H1 (cell line): ENCODE measurements at regions of chr12 and their contacts with region 1.

Region 1: GRCh38 chr12:90970473-90970872 is 15.5 kb upstream of the CCER1 start:
- DNase-seq: no peak
- H3K4me3 ChIP-seq: no peak overlapping the region
- H3K27ac ChIP-seq: no peak overlapping the region
- H3K4me1 ChIP-seq: no peaks in the 10 kb centered on the region
- H3K27me3 ChIP-seq: no peaks in the 10 kb centered on the region
- CTCF ChIP-seq: no peak
- EP300 ChIP-seq: no peak
- POLR2A ChIP-seq: no peak
- RAD21 ChIP-seq: no peak

Region 2: GRCh38 chr12:90953956-90954421 is 16.5 kb before region 1 on chr12:
- CTCF ChIA-PET with region 1: interaction called, 15 read pairs
- POLR2A ChIA-PET with region 1: no interaction called
- DNase-seq: peak; percentile 87 to 94
- H3K4me3 ChIP-seq: no peak overlapping the region
- H3K27ac ChIP-seq: no peak overlapping the region
- H3K4me1 ChIP-seq: no peaks in the 10 kb centered on the region
- H3K27me3 ChIP-seq: no peaks in the 10 kb centered on the region
- CTCF ChIP-seq: peak; percentile 95 to 99 (median 99)
- EP300 ChIP-seq: no peak
- POLR2A ChIP-seq: no peak
- RAD21 ChIP-seq: peak; percentile 58 to 65

Region 3: GRCh38 chr12:90959538-90960139 is 10.8 kb before region 1 on chr12:
- CTCF ChIA-PET with region 1: interaction called, 15 read pairs
- POLR2A ChIA-PET with region 1: no interaction called
- DNase-seq: no peak
- H3K4me3 ChIP-seq: no peak overlapping the region
- H3K27ac ChIP-seq: no peak overlapping the region
- H3K4me1 ChIP-seq: no peaks in the 10 kb centered on the region
- H3K27me3 ChIP-seq: no peaks in the 10 kb centered on the region
- CTCF ChIP-seq: peak in 2 of 3 experiments; percentile 63 to 64; a peak in 3 of 4 replicates
- EP300 ChIP-seq: no peak
- POLR2A ChIP-seq: no peak
- RAD21 ChIP-seq: peak; percentile 54 to 60